CD8-positive, alpha-beta T cell (primary cell): ENCODE measurements at regions of chr5 and their contacts with region 1.

Region 1: GRCh38 chr5:38809388-38810359 is 36.1 kb upstream of the OSMR start:
- DNase-seq: peak in 4 of 9 experiments; percentile 22 to 56 (median 38)
- ATAC-seq: no peak
- H3K4me3 ChIP-seq: no peak overlapping the region
- H3K4me3 Mint-ChIP-seq: no peak overlapping the region
- H3K27ac ChIP-seq: no peak overlapping the region
- H3K27ac Mint-ChIP-seq: no peak overlapping the region
- H3K4me1 ChIP-seq: no peaks in the 10 kb centered on the region
- H3K4me1 Mint-ChIP-seq: no peaks in the 10 kb centered on the region
- H3K27me3 ChIP-seq: peaks cover 0 to 8% of the 10 kb centered on the region in 2 experiments
- H3K27me3 Mint-ChIP-seq: peaks cover 41% of the 10 kb centered on the region
- CTCF ChIP-seq: peak; percentile 29

Region 2: GRCh38 chr5:38265546-38266179 is 544.0 kb before region 1 on chr5:
- CTCF ChIA-PET with region 1: no interaction called
- POLR2A ChIA-PET with region 1: no interaction called
- intact Hi-C with region 1: loop called in 1 of 2 experiments (anchors 10 kb)
- DNase-seq: peak in 6 of 9 experiments; percentile 3 to 54 (median 37)
- ATAC-seq: no peak
- H3K4me3 ChIP-seq: no peak overlapping the region
- H3K4me3 Mint-ChIP-seq: no peak overlapping the region
- H3K27ac ChIP-seq: no peak overlapping the region
- H3K27ac Mint-ChIP-seq: no peak overlapping the region
- H3K4me1 ChIP-seq: no peaks in the 10 kb centered on the region
- H3K4me1 Mint-ChIP-seq: no peaks in the 10 kb centered on the region
- H3K27me3 ChIP-seq: peaks cover 0 to 6% of the 10 kb centered on the region in 2 experiments
- H3K27me3 Mint-ChIP-seq: peaks cover 37% of the 10 kb centered on the region
- CTCF ChIP-seq: peak; percentile 50

Region 3: DNA sequence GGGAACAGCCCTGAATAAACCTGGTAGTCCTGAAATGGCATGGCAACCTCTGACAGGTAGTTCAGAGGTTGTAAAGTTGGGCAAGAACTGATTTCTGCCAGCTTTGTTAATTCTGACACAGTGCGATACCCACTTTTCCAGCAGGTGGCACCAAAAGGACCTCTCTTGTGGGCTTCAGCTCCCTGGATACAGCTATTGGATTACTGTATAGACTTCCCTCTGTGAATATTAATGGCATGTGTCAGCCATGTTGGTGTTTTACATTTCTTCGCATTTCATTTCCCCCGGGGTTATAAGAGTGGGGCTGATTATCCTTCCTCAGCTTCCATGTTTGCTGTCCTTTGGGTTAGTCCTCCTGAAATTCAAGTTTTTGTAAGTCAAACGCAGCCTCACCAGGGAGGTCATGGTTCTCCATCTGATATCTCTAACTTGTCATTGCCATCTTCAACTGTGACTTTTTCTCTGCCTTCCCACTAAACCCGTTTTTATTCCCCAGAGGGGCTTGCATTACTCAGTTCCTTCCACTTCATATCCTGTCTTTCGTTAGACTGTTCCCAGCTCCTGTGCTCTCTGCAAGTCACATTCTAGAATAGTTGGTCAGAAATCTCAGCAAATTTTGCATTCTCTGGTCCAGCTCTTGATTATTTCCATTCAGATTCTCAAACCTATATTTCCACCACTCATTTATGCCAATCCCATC is 388.8 kb before region 1 on chr5:
- CTCF ChIA-PET with region 1: interaction called, 4 read pairs
- POLR2A ChIA-PET with region 1: no interaction called
- intact Hi-C with region 1: loop called (anchors 5 kb)
- DNase-seq: peak in 4 of 9 experiments; percentile 11 to 33 (median 21)
- ATAC-seq: no peak
- H3K4me3 ChIP-seq: no peak overlapping the region
- H3K4me3 Mint-ChIP-seq: no peak overlapping the region
- H3K27ac ChIP-seq: no peak overlapping the region
- H3K27ac Mint-ChIP-seq: no peak overlapping the region
- H3K4me1 ChIP-seq: no peaks in the 10 kb centered on the region
- H3K4me1 Mint-ChIP-seq: no peaks in the 10 kb centered on the region
- H3K27me3 ChIP-seq: peaks cover 0 to 5% of the 10 kb centered on the region in 2 experiments
- H3K27me3 Mint-ChIP-seq: peaks cover 33% of the 10 kb centered on the region
- CTCF ChIP-seq: peak; percentile 53

Region 4: GRCh38 chr5:38755179-38755578 is 54.5 kb before region 1 on chr5:
- CTCF ChIA-PET with region 1: no interaction called
- POLR2A ChIA-PET with region 1: no interaction called
- intact Hi-C with region 1: no loop called
- DNase-seq: no peak
- ATAC-seq: no peak
- H3K4me3 ChIP-seq: no peak overlapping the region
- H3K4me3 Mint-ChIP-seq: no peak overlapping the region
- H3K27ac ChIP-seq: no peak overlapping the region
- H3K27ac Mint-ChIP-seq: no peak overlapping the region
- H3K4me1 ChIP-seq: no peaks in the 10 kb centered on the region
- H3K4me1 Mint-ChIP-seq: no peaks in the 10 kb centered on the region
- H3K27me3 ChIP-seq: no peaks in the 10 kb centered on the region
- H3K27me3 Mint-ChIP-seq: peaks cover 27% of the 10 kb centered on the region
- CTCF ChIP-seq: no peak

Region 5: GRCh38 chr5:38795986-38796741 is 13.5 kb before region 1 on chr5:
- CTCF ChIA-PET with region 1: no interaction called
- POLR2A ChIA-PET with region 1: no interaction called
- intact Hi-C with region 1: no loop called
- DNase-seq: no peak
- ATAC-seq: no peak
- H3K4me3 ChIP-seq: no peak overlapping the region
- H3K4me3 Mint-ChIP-seq: no peak overlapping the region
- H3K27ac ChIP-seq: no peak overlapping the region
- H3K27ac Mint-ChIP-seq: no peak overlapping the region
- H3K4me1 ChIP-seq: no peaks in the 10 kb centered on the region
- H3K4me1 Mint-ChIP-seq: no peaks in the 10 kb centered on the region
- H3K27me3 ChIP-seq: no peaks in the 10 kb centered on the region
- H3K27me3 Mint-ChIP-seq: peaks cover 11% of the 10 kb centered on the region
- CTCF ChIP-seq: no peak